ENCODE measurements at regions of chr6 and their contacts with region 1.

Region 1: DNA sequence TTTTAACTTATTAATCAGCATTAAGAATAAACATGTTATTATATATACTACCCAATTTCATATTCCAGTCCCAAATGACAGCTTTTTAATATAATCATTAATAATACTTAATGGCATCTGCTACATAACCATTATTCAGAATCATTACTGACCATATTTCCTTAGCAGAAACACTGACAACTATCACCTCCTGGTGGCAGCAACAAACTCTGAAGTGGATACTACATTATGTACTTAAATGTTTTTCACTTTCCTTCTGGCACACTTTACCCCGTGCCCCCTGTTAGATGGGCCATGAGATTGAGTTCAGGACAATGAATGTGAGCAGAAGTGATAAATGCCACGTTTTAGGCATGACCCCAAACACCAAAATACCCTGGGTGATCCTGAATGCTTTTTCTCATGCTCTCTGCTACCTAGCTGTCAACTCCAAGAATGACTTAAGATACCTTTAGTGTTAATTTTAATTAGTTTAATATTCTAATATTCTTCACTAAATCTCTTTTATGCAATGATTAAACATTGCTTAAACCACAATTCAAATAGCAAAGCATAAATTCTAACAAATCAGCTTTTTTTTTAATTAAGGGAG is 77.1 kb downstream of the LMBRD1 start:
- DNase-seq: peak; percentile 54
- H3K4me3 ChIP-seq: no peak overlapping the region
- H3K27ac ChIP-seq: no peak overlapping the region
- H3K4me1 ChIP-seq: no peaks in the 10 kb centered on the region
- H3K27me3 ChIP-seq: no peaks in the 10 kb centered on the region
- CTCF ChIP-seq: peak; percentile 64

Region 2: DNA sequence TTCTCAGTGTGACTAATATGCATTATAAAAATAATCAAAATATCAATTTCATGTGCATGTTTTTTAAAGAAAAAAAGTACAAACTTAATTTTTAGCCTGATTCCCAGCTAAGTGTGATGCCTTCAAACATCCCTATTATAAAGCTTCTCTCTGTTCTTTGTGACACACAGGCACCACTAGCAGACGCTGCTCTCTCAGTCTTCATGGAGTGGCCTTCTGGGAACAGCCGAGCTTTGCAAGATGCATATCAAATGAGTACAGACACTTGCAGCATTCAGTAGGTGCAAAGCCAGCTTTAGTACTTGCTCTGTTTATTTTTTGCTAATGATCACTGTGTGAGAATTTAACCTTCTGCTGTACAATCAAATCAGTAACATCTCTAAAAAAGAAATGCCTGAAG is 744.6 kb before region 1 on chr6:
- CTCF ChIA-PET with region 1: no interaction called
- POLR2A ChIA-PET with region 1: no interaction called
- intact Hi-C with region 1: loop called (anchors 10 kb)
- DNase-seq: peak; percentile 67
- H3K4me3 ChIP-seq: no peak overlapping the region
- H3K27ac ChIP-seq: no peak overlapping the region
- H3K4me1 ChIP-seq: peaks cover 9% of the 10 kb centered on the region
- H3K27me3 ChIP-seq: no peaks in the 10 kb centered on the region
- CTCF ChIP-seq: peak; percentile 62

Region 3: DNA sequence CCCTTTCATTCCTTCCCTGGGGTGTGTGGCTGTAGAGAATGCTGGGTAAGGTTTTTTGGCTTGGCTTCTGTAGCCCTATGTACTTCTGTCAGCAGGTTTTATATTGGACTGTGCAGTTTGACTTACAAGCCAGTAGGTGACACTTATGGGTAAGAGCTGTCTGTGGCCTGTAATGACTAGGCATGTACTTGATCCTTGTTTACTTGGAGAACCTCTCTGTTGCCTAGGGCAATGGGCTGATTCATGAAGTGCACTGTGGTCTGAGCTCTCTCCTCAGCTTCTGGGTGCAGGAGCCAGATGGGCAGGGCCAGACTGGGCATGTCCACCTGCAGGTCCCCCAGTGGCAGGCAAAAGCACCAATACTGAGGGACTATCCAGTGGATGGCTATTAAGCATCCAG is 540.0 kb before region 1 on chr6:
- CTCF ChIA-PET with region 1: no interaction called
- POLR2A ChIA-PET with region 1: no interaction called
- intact Hi-C with region 1: loop called (anchors 10 kb)
- DNase-seq: peak; percentile 34
- H3K4me3 ChIP-seq: no peak overlapping the region
- H3K27ac ChIP-seq: no peak overlapping the region
- H3K4me1 ChIP-seq: no peaks in the 10 kb centered on the region
- H3K27me3 ChIP-seq: no peaks in the 10 kb centered on the region
- CTCF ChIP-seq: peak; percentile 33

Measured in A673 (cell line).